Activated T-helper 2 cell treated with anti-CD3 and anti-CD28 coated beads, Interferon-gamma antibody, Interleukin-2, Interleukin-4, amounts not matched to agents 10 μg/mL and 5 μg/mL and 100 μg/mL, durations not matched to agents 14 hours and 24 hours and 36 hours (primary cell): ENCODE measurements at regions of chr7 and their contacts with region 1.

Region 1: DNA sequence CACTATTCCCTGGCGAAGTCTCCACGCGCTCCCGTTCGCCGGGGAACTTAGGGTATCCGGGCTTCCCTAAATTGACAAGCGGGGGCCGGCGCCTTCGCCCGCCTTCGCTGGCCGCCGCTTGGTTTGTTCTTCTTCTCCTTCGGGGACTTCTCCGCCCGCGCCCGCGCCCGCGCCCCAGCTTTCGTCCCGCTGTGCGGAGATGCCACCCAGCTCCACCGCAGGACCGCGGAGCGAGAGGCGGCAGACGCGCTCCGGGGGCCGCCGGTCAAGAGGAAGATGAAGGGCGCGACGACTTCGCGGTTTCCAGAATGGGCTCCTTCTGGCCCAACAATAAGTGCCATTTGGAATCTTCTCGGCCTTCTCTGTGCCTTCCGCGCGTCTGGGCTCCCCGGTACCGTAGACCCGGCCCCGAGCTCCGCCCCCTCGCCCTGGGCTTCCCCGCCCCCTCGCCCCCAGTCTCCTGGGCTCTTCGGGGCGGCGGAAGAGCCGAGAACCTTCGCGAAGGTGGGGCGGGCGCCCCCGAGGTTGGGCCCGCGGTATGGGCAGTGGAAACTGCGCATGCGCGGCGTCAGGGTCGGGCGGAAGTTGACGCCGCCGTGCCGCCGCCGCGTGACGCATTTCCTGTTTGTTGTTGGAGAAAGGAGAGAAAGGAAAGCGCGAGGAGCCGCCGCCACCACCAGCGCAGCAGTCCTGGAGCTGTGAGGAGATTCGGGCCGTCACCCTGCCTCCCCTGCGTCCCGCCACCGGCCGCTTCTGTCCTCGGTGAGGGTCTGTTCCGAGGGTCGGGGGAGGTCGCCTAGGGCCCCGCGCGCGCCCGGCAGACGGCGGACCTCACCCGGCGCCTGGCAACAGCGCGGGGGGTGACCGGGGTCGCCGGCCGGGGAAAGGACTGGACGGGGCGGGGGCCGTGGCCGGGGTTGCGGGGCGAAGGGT is at the start of gene DNAJB6:
- DNase-seq: peak; percentile 94
- H3K4me3 Mint-ChIP-seq: peak within 1 kb of the TSS; percentile 96
- H3K27ac Mint-ChIP-seq: peak within 1 kb of the TSS; percentile 96
- H3K4me1 Mint-ChIP-seq: peaks cover 27% of the 10 kb centered on the region
- H3K27me3 Mint-ChIP-seq: peaks cover 11% of the 10 kb centered on the region
- total RNA-seq, gene DNAJB6: 122 and 125 TPM in 2 replicates

Region 2: DNA sequence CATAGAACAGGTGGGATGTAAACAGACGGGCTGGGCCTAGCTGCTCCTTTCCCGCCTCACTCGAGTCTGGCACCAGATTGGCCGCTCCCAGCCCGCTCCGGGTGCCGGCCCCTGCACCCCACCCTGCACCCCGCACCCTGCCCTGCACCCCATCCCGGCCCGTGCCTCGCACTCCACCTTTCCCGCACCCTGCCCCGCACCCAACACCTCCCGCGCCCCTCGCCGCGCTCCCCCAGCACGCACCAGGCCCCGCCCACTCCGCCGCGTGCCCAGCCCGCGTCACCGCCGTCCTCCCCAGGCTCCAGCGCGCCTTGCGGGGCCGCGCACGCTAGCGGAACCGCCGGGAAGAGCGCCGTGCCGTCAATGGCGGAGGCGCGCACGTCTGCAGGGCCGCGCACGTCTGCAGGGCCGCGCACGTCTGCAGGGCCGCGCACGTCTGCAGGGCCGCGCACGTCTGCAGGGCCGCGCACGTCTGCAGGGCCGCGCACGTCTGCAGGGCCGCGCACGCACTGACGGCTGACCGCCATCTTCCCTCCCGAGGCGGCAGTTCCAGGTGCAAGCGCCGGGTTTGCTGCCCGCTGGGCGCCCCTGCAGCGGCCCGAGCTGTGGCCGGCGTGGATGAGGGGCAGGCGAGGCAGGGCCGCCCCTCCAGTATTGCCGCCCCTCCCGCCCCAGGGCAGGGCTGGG is 198.1 kb before region 1 on chr7 and contains the start of gene UBE3C:
- intact Hi-C with region 1: loop called (anchors 5 kb)
- DNase-seq: peak; percentile 89
- H3K4me3 Mint-ChIP-seq: peak within 1 kb of the TSS; percentile 87
- H3K27ac Mint-ChIP-seq: peak within 1 kb of the TSS; percentile 96
- H3K4me1 Mint-ChIP-seq: peaks cover 32% of the 10 kb centered on the region
- H3K27me3 Mint-ChIP-seq: no peaks in the 10 kb centered on the region
- total RNA-seq, gene UBE3C: 84.9 and 85.7 TPM in 2 replicates

Region 3: GRCh38 chr7:157239571-157240270 is 96.9 kb before region 1 on chr7:
- intact Hi-C with region 1: no loop called
- DNase-seq: no peak
- H3K4me3 Mint-ChIP-seq: no peak overlapping the region
- H3K27ac Mint-ChIP-seq: no peak overlapping the region
- H3K4me1 Mint-ChIP-seq: peaks cover under 1% of the 10 kb centered on the region
- H3K27me3 Mint-ChIP-seq: no peaks in the 10 kb centered on the region

Region 4: GRCh38 chr7:157273208-157274093 is 63.2 kb before region 1 on chr7:
- intact Hi-C with region 1: loop called (anchors 2 kb)
- DNase-seq: peak; percentile 42
- H3K4me3 Mint-ChIP-seq: no peak overlapping the region
- H3K27ac Mint-ChIP-seq: no peak overlapping the region
- H3K4me1 Mint-ChIP-seq: peaks cover 20% of the 10 kb centered on the region
- H3K27me3 Mint-ChIP-seq: peaks cover 2% of the 10 kb centered on the region

Region 5: DNA sequence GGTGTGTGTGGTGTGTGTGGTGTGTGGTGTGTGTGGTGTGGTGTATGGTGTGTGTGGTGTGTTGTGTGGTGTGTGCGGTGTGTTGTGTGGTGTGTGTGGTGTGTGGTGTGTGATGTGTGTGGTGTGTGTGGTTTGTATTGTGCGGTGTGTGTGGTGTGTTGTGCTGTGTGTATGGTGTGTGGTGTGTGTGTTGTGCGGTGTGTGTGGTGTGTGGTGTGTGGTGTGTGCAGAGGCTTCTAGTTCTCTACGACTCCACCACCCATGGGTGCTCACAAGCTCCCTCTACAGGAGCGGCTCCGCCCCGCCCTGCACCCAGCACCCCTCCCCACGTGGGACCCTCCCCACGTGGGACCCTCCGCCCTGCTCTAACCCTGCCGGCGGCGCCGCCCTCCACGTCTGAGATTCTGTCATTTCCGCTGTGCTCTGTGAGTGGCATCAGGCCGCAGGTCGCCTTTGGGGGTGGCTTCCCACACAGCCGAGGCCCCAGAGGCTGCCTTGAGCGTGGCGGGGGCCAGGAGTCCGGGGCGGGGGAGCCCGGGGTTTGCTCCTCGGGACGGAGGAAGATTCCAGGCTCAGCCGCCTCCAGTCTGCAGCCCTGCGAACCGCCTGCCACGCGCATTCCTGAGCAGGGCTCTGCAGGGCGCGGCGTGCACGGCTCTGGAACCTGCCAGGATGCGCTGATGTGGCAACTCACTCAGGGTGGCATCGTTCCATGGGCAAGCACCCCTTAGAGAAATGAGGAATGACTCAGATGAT is 36.9 kb before region 1 on chr7:
- intact Hi-C with region 1: loop called (anchors 1 kb)
- DNase-seq: no peak
- H3K4me3 Mint-ChIP-seq: no peak overlapping the region
- H3K27ac Mint-ChIP-seq: peak overlapping the region; percentile 38
- H3K4me1 Mint-ChIP-seq: peaks cover 32% of the 10 kb centered on the region
- H3K27me3 Mint-ChIP-seq: no peaks in the 10 kb centered on the region

Region 6: GRCh38 chr7:157309990-157310668 is 26.5 kb before region 1 on chr7:
- intact Hi-C with region 1: loop called (anchors 2 kb)
- DNase-seq: no peak
- H3K4me3 Mint-ChIP-seq: no peak overlapping the region
- H3K27ac Mint-ChIP-seq: no peak overlapping the region
- H3K4me1 Mint-ChIP-seq: peaks cover 24% of the 10 kb centered on the region
- H3K27me3 Mint-ChIP-seq: no peaks in the 10 kb centered on the region

Region 7: DNA sequence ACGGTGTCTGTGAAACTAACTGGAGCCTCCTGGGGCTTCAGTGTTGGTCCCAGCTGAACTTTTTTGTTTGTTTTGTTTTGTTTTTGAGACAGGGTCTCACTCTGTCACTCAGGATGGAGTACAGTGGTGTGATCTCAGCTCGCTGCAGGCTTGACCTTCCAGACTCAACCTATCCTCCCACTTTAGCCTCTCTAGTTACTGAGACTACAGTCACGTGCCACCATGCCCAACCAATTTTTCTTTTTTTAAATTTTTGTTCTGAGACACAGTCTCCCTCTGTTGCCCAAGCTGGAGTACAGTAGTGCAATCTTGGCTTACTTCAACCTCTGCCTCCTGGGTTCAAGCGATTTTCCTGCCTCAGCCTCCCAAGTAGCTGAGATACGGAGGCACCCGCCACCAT is 13.2 kb before region 1 on chr7:
- intact Hi-C with region 1: no loop called
- DNase-seq: no peak
- H3K4me3 Mint-ChIP-seq: no peak overlapping the region
- H3K27ac Mint-ChIP-seq: no peak overlapping the region
- H3K4me1 Mint-ChIP-seq: peaks cover 5% of the 10 kb centered on the region
- H3K27me3 Mint-ChIP-seq: peaks cover 3% of the 10 kb centered on the region

Region 8: DNA sequence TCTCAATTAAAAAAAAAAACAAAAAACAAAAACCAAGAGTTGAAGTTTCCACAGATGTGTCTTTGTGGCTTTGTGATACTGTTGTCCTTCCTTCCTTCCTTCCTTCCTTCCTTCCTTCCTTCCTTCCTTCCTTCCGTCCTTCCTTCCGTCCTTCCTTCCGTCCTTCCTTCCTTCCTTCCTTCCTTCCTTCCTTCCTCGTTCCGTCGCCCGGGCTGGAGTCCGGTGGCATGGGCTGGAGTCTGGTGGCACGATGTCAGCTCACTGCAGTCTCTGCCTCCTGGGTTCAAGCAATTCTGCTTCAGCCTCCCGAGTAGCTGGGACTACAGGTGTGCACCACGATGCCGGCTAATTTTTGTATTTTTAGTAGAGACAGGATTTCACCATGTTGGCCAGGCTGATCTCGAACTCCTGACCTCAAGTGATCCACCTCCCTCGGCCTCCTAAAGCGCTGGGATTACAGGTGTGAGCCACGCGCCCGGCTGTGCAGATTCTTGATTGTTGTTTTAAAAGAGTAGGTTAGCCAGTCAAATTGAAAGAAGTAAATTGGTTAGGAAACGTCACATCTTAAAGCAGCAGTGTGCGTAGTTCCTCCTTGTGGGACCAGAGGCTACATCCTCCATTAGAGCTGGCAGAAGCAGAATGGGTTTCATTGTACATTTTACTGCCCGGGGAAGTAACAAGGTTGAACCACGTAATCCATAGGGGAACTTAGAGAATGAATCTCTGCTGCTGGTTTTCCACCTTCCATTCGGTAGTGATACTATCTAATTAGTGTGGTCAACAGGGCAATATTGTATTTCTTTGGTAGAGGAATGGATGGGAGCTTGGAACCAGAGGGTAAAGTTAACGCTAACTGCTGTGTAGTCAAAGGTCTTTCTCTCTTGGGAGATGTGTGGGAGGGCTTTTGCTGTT is 20.7 kb after region 1 on chr7:
- intact Hi-C with region 1: no loop called
- DNase-seq: no peak
- H3K4me3 Mint-ChIP-seq: no peak overlapping the region
- H3K27ac Mint-ChIP-seq: peak overlapping the region; percentile 65
- H3K4me1 Mint-ChIP-seq: peaks cover 46% of the 10 kb centered on the region
- H3K27me3 Mint-ChIP-seq: no peaks in the 10 kb centered on the region

Region 9: GRCh38 chr7:157386979-157387800 is 50.5 kb after region 1 on chr7:
- intact Hi-C with region 1: loop called (anchors 1 kb)
- DNase-seq: peak; percentile 79
- H3K4me3 Mint-ChIP-seq: no peak overlapping the region
- H3K27ac Mint-ChIP-seq: peak overlapping the region; percentile 55
- H3K4me1 Mint-ChIP-seq: peaks cover 37% of the 10 kb centered on the region
- H3K27me3 Mint-ChIP-seq: no peaks in the 10 kb centered on the region

Region 10: DNA sequence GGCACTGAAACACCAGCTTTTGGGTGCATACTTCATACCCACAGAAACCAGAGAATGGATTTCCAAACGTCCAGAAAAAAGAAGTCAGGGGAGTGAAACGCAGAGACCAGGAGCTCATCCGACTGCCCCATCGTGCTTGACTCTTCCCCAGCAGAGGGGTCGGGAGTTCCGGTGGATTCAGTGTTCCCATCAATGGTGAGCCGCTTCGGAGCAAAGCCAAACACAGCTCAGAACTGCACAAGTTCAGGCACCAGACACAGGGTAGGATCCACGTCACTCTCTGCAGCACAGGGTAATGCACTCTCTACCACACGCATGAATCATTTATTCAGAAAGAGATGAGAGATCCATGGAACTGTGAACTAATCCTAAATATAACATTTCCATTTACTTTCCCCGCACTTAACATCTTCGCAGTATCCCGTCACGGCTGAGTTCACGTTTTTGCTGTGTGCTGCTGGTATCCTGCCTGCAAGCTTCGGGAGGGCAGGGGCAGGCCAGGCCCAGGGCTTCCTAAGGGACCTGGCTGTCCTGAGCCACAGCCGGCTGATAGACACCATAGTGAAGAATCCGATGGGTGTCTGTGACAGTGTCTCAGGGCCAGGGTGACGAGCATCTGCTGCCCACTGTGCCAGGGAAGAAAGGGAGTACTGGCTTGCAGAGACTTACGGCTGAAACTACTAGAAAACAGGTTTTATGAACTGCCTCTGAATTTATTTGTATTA is 705.7 kb after region 1 on chr7:
- intact Hi-C with region 1: no loop called
- DNase-seq: no peak
- H3K4me3 Mint-ChIP-seq: no peak overlapping the region
- H3K27ac Mint-ChIP-seq: no peak overlapping the region
- H3K4me1 Mint-ChIP-seq: no peaks in the 10 kb centered on the region
- H3K27me3 Mint-ChIP-seq: no peaks in the 10 kb centered on the region